CD4-positive, alpha-beta memory T cell (primary cell): ENCODE measurements at regions of chr3 and their contacts with region 1.

Region 1: DNA sequence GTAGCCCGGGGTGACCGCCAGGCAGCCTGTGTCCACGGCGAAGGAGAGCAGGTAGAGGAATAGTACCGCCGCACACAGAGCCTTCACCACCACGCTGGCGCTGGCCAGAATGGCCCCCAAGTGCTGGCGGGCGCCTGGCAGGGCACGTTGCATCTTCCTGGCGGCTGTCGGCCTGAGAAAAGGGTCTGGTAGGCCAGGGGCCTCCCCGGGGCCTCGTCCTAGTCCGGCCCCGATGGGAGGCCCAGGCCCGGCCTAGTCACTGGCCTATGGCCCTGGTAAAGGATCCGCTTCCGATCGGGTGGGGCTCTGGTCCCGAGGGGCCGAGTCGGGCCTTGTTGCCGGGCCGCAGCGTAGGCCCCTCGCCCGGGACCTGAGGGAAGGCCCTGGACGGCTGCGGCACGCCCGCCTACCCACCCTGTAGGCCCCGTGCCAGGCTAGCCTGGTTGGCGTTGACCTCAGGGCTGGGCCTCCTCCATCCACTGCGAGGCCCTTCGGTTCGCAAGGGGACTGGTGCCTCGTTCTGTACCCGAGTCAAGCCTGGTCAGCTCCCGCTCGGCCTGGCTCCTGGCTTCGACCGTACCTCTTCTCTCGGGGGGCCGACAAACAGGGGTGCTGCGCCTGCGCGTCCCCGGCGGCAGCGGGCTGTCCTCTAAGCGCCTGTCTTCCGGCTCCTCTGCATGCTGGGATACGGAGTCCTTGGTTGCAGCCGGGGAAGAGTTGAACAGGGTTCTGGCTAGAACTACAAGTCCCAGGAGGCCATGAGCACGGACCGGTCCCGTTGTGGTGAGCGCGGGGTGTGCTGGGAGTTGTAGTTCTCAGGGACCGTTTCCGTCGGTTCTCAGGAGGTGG is at the start of gene TMEM115:
- DNase-seq: peak; percentile 93 to 99 (median 96)
- H3K4me3 ChIP-seq: peak within 1 kb of the TSS; percentile 78 to 95
- H3K4me3 Mint-ChIP-seq: peak within 1 kb of the TSS; percentile 95 to 100 (median 98)
- H3K27ac ChIP-seq: peak within 1 kb of the TSS; percentile 97
- H3K27ac Mint-ChIP-seq: peak within 1 kb of the TSS; percentile 96 to 98 (median 98)
- H3K4me1 ChIP-seq: peaks cover 44% of the 10 kb centered on the region
- H3K4me1 Mint-ChIP-seq: peaks cover 30 to 49% (median 39%) of the 10 kb centered on the region in 4 donors
- H3K27me3 ChIP-seq: no peaks in the 10 kb centered on the region
- H3K27me3 Mint-ChIP-seq: no peaks in the 10 kb centered on the region
- total RNA-seq, gene TMEM115: 31.1 to 34.6 TPM

Region 2: DNA sequence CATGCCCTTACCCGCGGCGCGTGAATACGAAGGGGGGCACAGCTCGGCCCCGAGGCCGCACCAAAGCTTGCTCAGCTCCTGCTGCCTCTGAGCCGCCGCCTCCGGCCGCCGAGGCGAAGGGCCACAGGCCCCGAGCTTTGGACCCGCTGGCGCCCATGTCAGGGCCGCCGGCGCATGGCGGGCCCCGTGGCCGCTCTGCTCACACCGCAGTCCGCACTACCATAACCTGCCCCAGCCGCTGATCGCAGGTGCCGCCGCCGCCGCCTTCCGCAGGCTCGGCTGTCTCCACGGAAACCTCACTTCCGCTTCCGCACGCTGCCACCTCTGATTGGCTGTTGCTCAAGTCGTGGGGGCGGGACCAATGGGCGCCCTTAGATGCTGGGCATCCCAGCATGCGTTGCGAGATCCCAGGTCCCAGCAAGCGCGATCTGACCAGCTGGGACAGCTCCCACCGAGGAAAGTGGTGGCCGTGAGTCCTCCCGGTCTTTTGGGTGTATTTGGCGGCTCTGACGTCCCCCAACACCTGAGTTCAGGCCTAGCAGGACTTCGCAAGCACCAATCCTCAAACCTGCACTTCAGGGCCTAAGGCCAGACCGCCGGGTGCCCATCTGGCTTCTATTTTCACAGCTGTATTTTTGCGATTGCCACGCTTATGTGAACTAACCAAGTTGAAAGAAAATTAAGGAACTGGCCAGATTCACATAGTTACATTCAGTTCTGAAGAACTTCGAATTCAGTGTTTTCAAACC is 31.0 kb before region 1 on chr3 and contains the start of gene TUSC2:
- CTCF ChIA-PET with region 1: no interaction called
- POLR2A ChIA-PET with region 1: interaction called, 595 read pairs
- intact Hi-C with region 1: loop called (anchors 1 kb)
- DNase-seq: peak; percentile 91 to 96 (median 93)
- H3K4me3 ChIP-seq: peak within 1 kb of the TSS; percentile 73 to 91
- H3K4me3 Mint-ChIP-seq: peak within 1 kb of the TSS; percentile 91 to 97 (median 94)
- H3K27ac ChIP-seq: peak within 1 kb of the TSS; percentile 82
- H3K27ac Mint-ChIP-seq: peak within 1 kb of the TSS; percentile 93 to 97 (median 97)
- H3K4me1 ChIP-seq: peaks cover 22% of the 10 kb centered on the region
- H3K4me1 Mint-ChIP-seq: peaks cover 13 to 42% (median 23%) of the 10 kb centered on the region in 4 donors
- H3K27me3 ChIP-seq: no peaks in the 10 kb centered on the region
- H3K27me3 Mint-ChIP-seq: no peaks in the 10 kb centered on the region
- total RNA-seq, gene TUSC2: 25.3 to 30.0 TPM

Region 3: GRCh38 chr3:50486219-50486888 is 127.2 kb after region 1 on chr3:
- CTCF ChIA-PET with region 1: no interaction called
- POLR2A ChIA-PET with region 1: no interaction called
- intact Hi-C with region 1: no loop called
- DNase-seq: no peak
- H3K4me3 ChIP-seq: no peak overlapping the region
- H3K4me3 Mint-ChIP-seq: no peak overlapping the region
- H3K27ac ChIP-seq: no peak overlapping the region
- H3K27ac Mint-ChIP-seq: no peak overlapping the region
- H3K4me1 ChIP-seq: peaks cover 12% of the 10 kb centered on the region
- H3K4me1 Mint-ChIP-seq: peaks cover 0 to 16% (median 4%) of the 10 kb centered on the region in 4 donors
- H3K27me3 ChIP-seq: no peaks in the 10 kb centered on the region
- H3K27me3 Mint-ChIP-seq: no peaks in the 10 kb centered on the region